Right lobe of liver (tissue), 6 donors: ENCODE measurements at regions of chr9 and their contacts with region 1.

Region 1: GRCh38 chr9:18255158-18255629 is 218.8 kb upstream of the ADAMTSL1 start:
- DNase-seq: peak; percentile 79 to 83 (median 81)
- ATAC-seq: peak; percentile 90 to 95 (median 92)
- H3K4me3 ChIP-seq: no peak overlapping the region
- H3K27ac ChIP-seq: no peak overlapping the region
- H3K4me1 ChIP-seq: no peaks in the 10 kb centered on the region
- H3K27me3 ChIP-seq: no peaks in the 10 kb centered on the region
- CTCF ChIP-seq: peak; percentile 83 to 95 (median 94)
- POLR2A ChIP-seq: no peak

Region 2: DNA sequence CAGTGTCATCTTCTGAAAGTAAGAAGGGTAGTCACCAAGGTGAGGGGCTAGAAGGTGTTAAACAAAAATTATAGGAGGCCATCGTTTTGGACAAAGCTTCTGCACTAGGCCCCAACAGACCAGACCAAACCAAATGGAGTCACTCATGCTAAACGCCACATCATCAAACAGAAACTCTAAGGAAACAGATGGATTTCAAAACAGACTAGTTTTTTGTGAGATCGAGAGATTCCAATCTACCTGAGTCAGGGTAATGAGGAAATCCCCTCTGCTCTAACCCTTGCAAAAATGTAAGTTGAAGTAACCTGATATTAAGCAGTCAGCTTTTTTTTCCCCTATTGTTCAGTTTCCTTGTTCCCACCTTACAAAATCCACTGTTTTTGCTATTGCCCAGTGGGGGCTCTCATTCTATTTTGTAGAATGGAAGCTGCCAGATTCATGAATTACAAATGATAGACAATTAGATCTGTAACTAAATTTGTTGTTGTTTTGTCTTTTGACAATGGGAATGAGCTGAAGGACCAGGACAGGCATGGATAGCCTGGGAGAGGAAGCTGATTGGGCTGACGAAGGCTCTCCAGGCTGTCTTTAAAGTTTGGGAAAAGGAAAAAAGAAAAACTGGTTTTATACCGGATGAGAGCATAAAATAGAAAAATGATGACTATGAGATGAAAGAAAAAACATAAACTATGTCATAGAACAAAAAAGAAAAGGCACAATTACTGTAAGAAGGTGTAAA is 124.0 kb after region 1 on chr9:
- intact Hi-C with region 1: no loop called
- DNase-seq: no peak
- ATAC-seq: no peak
- H3K4me3 ChIP-seq: no peak overlapping the region
- H3K27ac ChIP-seq: no peak overlapping the region
- H3K4me1 ChIP-seq: no peaks in the 10 kb centered on the region
- H3K27me3 ChIP-seq: no peaks in the 10 kb centered on the region
- CTCF ChIP-seq: no peak
- POLR2A ChIP-seq: no peak

Region 3: GRCh38 chr9:18442629-18443491 is 187.7 kb after region 1 on chr9:
- intact Hi-C with region 1: loop called in 1 of 2 experiments (anchors 10 kb)
- DNase-seq: peak; percentile 69 to 75 (median 73)
- ATAC-seq: peak; percentile 63 to 80 (median 68)
- H3K4me3 ChIP-seq: no peak overlapping the region
- H3K27ac ChIP-seq: no peak overlapping the region
- H3K4me1 ChIP-seq: peaks cover 0 to 17% (median 7%) of the 10 kb centered on the region in 4 donors
- H3K27me3 ChIP-seq: no peaks in the 10 kb centered on the region
- CTCF ChIP-seq: peak; percentile 76 to 95 (median 94)
- POLR2A ChIP-seq: no peak

Region 4: DNA sequence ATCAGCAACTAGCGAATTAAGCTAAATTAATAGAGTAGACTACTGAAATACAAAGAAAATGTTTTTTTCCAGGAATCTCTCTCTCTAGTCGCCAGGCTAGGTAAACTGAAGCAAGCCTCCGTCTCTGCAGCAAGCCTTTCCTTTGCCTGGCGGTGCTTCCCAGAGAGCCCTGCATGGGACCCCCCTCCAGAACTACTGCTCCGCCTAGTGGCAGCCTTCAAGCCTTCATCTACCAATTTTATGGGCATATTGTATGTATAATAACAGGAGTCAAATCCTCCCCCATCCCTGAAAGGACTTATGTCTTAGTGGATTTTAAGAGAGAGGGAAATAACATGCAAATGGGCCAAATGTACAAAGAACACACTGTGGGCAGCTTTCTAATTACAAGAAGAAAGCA is 535.9 kb after region 1 on chr9:
- intact Hi-C with region 1: loop called in 1 of 2 experiments (anchors 10 kb)
- DNase-seq: peak in 2 of 3 donors; percentile 30 to 53
- ATAC-seq: peak; percentile 75 to 83 (median 80)
- H3K4me3 ChIP-seq: no peak overlapping the region
- H3K27ac ChIP-seq: no peak overlapping the region
- H3K4me1 ChIP-seq: no peaks in the 10 kb centered on the region
- H3K27me3 ChIP-seq: no peaks in the 10 kb centered on the region
- CTCF ChIP-seq: peak; percentile 35 to 65 (median 52)
- POLR2A ChIP-seq: no peak